ENCODE measurements at regions of chr20 and their contacts with region 1.

Region 1: DNA sequence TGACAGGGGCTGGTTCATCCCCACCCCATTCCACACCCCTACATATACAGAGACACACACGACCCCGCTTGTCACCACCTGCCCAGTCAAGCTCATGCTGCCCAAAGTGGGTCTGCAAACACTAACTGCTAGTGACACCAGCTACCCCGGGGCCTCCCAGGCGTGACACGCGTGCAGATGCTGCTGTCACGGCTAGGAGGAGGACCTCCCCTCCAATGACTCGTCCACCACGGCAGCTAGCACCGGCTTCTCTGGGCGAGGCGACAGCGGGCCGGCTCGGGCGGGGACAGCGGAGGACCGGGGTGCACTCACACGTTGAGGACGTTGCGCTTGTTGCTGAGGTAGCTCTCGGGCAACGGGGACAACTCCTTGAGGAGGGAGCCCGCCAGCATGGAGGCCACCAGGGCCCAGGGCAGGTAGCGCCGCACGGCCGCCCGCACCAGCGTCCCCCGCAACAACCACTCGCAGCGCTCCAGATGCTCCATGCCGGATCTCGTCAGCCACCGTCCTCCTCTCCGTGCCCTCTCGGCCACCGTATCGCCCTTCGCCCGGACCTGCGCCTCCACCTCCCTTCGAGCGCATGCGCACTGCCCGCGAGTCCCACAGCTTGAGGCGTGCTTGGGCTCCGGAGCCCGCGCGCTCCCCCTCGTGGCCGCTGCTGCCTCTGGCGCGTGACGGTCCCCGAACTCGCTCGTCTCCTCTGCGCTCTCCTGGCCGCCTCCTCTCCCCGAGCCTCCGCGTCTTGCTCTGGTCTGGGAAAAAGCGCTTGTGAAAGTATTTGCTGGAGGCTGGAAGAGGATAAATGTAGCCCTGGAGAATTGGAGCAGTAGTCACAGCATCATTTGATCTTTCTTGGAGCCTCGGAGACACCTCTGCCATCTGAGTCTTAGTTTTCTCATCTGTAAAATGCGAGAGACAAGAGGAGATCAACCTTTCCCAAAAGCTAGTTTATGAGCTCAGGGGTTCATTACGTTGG is at the start of gene FITM2:
- DNase-seq: peak; percentile 99
- H3K4me3 ChIP-seq: peak within 1 kb of the TSS; percentile 81 to 92
- H3K27ac ChIP-seq: peak within 1 kb of the TSS in 1 of 2 experiments; percentile 68; a peak in 1 of 4 replicates
- H3K4me1 ChIP-seq: peaks cover 4 to 10% of the 10 kb centered on the region in 2 experiments; a peak in 1 of 4 replicates
- H3K27me3 ChIP-seq: no peaks in the 10 kb centered on the region
- CTCF ChIP-seq: peak; percentile 87
- EP300 ChIP-seq: no peak
- RAD21 ChIP-seq: peak; percentile 84
- polyA plus RNA-seq, gene FITM2: 2.8 and 3.6 TPM in 2 replicates

Region 2: GRCh38 chr20:44222633-44223368 is 88.2 kb before region 1 on chr20:
- CTCF ChIA-PET with region 1: interaction called, 264 read pairs
- POLR2A ChIA-PET with region 1: interaction called, 3 read pairs
- DNase-seq: no peak
- H3K4me3 ChIP-seq: peak overlapping the region in 1 of 2 experiments; percentile 33; a peak in 1 of 4 replicates
- H3K27ac ChIP-seq: no peak overlapping the region
- H3K4me1 ChIP-seq: peaks cover 0 to 12% of the 10 kb centered on the region in 2 experiments; a peak in 1 of 4 replicates
- H3K27me3 ChIP-seq: no peaks in the 10 kb centered on the region
- CTCF ChIP-seq: peak; percentile 17; the same call in 1 of the 2 replicates
- EP300 ChIP-seq: no peak
- RAD21 ChIP-seq: no peak

Region 3: DNA sequence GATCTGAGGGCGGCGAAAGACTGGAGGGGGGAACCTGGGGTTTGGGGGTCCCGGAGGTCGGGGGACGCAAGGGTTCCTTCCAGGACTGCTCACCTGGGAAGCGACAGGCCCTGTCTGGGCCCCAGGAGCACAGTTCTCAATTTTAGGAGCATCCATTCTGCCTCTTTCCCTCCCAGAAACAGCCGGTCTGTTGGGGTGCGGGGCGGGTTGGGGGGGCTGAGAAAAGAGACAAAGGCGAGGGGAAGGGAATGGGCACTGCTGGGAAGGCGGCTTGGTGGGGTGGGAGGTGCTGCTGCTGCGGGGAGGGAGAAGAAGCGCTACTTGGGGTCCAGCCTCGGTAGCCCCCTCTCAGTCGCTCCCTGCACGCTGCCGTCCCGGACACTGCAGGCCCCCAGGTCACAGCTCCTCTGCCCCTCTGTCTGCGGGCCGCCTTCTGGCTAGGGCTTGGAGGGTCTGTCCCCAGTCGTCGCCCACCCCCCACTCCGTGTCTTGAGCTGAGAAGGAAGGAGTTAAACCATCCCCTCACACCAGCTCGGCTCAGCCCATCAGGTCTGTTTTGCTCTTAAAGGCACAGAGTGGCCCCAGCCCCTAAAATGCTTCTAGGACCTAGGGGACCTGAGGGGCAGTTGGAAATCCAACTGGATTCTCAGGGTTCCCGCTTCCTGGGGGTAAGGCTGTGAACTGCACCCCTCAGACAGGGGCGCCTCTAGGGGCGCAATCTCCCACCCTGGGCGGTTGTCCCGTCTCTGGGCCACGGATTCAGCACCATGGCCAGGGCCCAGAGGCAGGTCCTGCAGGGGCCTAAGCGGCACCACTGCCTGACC is 63.2 kb before region 1 on chr20:
- CTCF ChIA-PET with region 1: interaction called, 18 read pairs
- POLR2A ChIA-PET with region 1: interaction called, 4 read pairs
- DNase-seq: peak; percentile 69
- H3K4me3 ChIP-seq: peak overlapping the region; percentile 52 to 53
- H3K27ac ChIP-seq: peak overlapping the region in 1 of 2 experiments; percentile 48; a peak in 1 of 4 replicates
- H3K4me1 ChIP-seq: peaks cover 0 to 4% of the 10 kb centered on the region in 2 experiments; a peak in 2 of 4 replicates
- H3K27me3 ChIP-seq: peaks cover 5% of the 10 kb centered on the region; the same call in 1 of the 2 replicates
- CTCF ChIP-seq: peak; percentile 55
- EP300 ChIP-seq: no peak
- RAD21 ChIP-seq: no peak

Region 4: GRCh38 chr20:44291754-44292153 is 19.2 kb before region 1 on chr20:
- CTCF ChIA-PET with region 1: interaction called, 24 read pairs
- POLR2A ChIA-PET with region 1: no interaction called
- DNase-seq: no peak
- H3K4me3 ChIP-seq: no peak overlapping the region
- H3K27ac ChIP-seq: no peak overlapping the region
- H3K4me1 ChIP-seq: no peaks in the 10 kb centered on the region
- H3K27me3 ChIP-seq: no peaks in the 10 kb centered on the region
- CTCF ChIP-seq: no peak
- EP300 ChIP-seq: no peak
- RAD21 ChIP-seq: no peak

Region 5: GRCh38 chr20:44382641-44383040 is 71.7 kb after region 1 on chr20:
- CTCF ChIA-PET with region 1: interaction called, 14 read pairs
- POLR2A ChIA-PET with region 1: no interaction called
- DNase-seq: no peak
- H3K4me3 ChIP-seq: no peak overlapping the region
- H3K27ac ChIP-seq: no peak overlapping the region
- H3K4me1 ChIP-seq: no peaks in the 10 kb centered on the region
- H3K27me3 ChIP-seq: peaks cover 6% of the 10 kb centered on the region; the same call in 1 of the 2 replicates
- CTCF ChIP-seq: no peak
- EP300 ChIP-seq: no peak
- RAD21 ChIP-seq: no peak

Region 6: GRCh38 chr20:44400671-44401051 is 89.7 kb after region 1 on chr20:
- CTCF ChIA-PET with region 1: no interaction called
- POLR2A ChIA-PET with region 1: no interaction called
- DNase-seq: no peak
- H3K4me3 ChIP-seq: no peak overlapping the region
- H3K27ac ChIP-seq: no peak overlapping the region
- H3K4me1 ChIP-seq: peaks cover 0 to 10% of the 10 kb centered on the region in 2 experiments; a peak in 1 of 4 replicates
- H3K27me3 ChIP-seq: peaks cover 7% of the 10 kb centered on the region; the same call in 1 of the 2 replicates
- CTCF ChIP-seq: no peak
- EP300 ChIP-seq: no peak
- RAD21 ChIP-seq: no peak

Region 7: DNA sequence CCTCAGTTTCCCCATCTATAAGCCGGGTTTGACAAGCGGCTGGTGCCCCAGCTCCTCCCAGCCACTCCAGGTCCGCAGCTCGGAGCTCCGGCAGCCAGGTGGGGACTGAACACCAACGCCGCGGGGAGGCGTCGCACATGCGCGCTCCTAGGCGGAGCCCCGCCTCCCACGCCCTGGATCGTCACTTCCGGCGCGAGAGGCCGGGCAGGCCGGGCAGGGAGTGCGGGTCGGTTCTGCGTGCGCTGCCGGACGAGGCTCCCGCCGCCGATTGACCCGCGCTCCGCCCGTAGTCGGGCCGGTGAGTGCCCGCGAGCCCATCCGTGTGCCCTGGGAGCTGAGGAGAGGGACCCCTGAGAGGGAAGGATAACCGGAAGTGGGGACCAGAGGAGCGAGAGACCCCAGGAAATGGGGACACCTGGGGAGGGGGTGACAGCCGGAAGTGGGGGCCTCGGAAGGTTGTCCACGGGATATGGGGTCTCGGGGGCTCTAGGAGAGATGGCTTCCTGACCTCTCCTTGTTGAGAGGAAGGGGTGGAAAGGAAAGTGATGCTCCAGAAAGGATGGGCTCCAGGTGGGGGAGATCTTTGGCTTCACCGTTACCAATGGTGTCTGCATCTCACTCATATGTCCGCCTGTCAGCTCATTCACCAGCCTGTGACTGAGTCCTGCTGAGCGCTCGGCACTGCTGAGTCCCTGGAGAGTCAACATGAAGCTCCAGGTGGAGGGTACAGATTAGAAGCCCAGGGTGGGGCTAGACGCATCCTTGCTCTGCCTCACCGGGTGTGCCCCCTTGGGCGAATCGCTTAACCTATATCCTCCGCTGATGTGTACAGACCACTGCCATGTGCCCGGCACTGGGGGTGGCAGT is 165.0 kb after region 1 on chr20 and contains the start of gene TTPAL:
- CTCF ChIA-PET with region 1: interaction called, 13 read pairs
- POLR2A ChIA-PET with region 1: no interaction called
- DNase-seq: peak; percentile 97
- H3K4me3 ChIP-seq: peak within 1 kb of the TSS; percentile 81 to 82
- H3K27ac ChIP-seq: peak within 1 kb of the TSS; percentile 72 to 89
- H3K4me1 ChIP-seq: peaks cover 0 to 16% of the 10 kb centered on the region in 2 experiments; a peak in 2 of 4 replicates
- H3K27me3 ChIP-seq: no peaks in the 10 kb centered on the region
- CTCF ChIP-seq: peak; percentile 36
- EP300 ChIP-seq: no peak
- RAD21 ChIP-seq: 0 out of 2 replicates have a peak, but pooled peaks have one; percentile 16
- polyA plus RNA-seq, gene TTPAL: 4.9 and 5.7 TPM in 2 replicates

Region 8: DNA sequence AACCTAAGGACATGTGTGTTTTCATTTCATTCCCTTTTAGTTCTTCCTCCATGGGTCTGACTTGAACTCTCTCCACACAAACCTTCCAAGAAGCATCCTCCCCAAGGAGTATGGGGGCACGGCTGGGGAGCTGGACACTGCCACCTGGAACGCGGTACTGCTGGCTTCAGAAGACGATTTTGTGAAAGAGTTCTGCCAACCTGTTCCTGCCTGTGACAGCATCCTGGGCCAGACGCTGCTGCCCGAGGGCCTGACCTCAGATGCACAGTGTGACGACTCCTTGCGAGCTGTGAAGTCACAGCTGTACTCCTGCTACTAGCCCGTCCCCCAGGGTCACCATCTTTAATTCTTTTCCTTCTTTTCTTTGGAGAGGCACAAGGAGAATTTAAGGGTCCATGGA is 178.3 kb after region 1 on chr20:
- CTCF ChIA-PET with region 1: no interaction called
- POLR2A ChIA-PET with region 1: no interaction called
- DNase-seq: no peak
- H3K4me3 ChIP-seq: no peak overlapping the region
- H3K27ac ChIP-seq: no peak overlapping the region
- H3K4me1 ChIP-seq: peaks cover 0 to 11% of the 10 kb centered on the region in 2 experiments; a peak in 2 of 4 replicates
- H3K27me3 ChIP-seq: no peaks in the 10 kb centered on the region
- CTCF ChIP-seq: no peak
- EP300 ChIP-seq: no peak
- RAD21 ChIP-seq: no peak